ENCODE measurements at regions of chr9 and their contacts with region 1.

Region 1: GRCh38 chr9:73104342-73104741 is 47.3 kb upstream of the ANXA1 start:
- DNase-seq: no peak
- H3K4me3 Mint-ChIP-seq: no peak overlapping the region
- H3K27ac Mint-ChIP-seq: no peak overlapping the region
- H3K4me1 Mint-ChIP-seq: peaks cover 2% of the 10 kb centered on the region
- H3K27me3 Mint-ChIP-seq: peaks cover 25% of the 10 kb centered on the region

Region 2: DNA sequence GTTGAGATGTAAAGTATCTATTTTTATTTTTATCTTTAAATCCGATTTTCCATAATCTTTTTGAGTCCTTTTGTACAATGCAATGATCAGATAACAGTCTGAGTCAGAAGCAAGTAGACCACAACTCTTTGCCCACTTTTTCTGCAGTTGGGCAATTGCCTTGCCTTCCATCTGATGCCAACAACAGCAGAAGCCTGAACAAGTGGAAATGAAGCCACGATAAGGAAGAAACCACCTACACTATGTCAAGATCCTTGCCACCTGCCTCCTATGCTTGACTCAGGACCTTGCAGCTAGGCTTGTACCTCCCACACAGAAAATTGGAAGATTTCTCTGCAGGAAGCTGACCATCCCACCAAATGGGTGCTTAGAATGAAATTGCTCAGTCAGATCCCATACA is 125.9 kb after region 1 on chr9:
- intact Hi-C with region 1: no loop called
- DNase-seq: no peak
- H3K4me3 Mint-ChIP-seq: no peak overlapping the region
- H3K27ac Mint-ChIP-seq: no peak overlapping the region
- H3K4me1 Mint-ChIP-seq: peaks cover 11% of the 10 kb centered on the region
- H3K27me3 Mint-ChIP-seq: peaks cover 8% of the 10 kb centered on the region

Region 3: GRCh38 chr9:73411494-73411893 is 307.2 kb after region 1 on chr9:
- intact Hi-C with region 1: loop called (anchors 10 kb)
- DNase-seq: no peak
- H3K4me3 Mint-ChIP-seq: no peak overlapping the region
- H3K27ac Mint-ChIP-seq: no peak overlapping the region
- H3K4me1 Mint-ChIP-seq: peaks cover 1% of the 10 kb centered on the region
- H3K27me3 Mint-ChIP-seq: no peaks in the 10 kb centered on the region